ENCODE measurements at regions of chr15 and their contacts with region 1.

Region 1: GRCh38 chr15:60326824-60327654 is 70.7 kb downstream of the ANXA2 start:
- DNase-seq: peak; percentile 47
- ATAC-seq: peak; percentile 74
- H3K4me3 ChIP-seq: no peak overlapping the region
- H3K27ac ChIP-seq: no peak overlapping the region
- H3K4me1 ChIP-seq: no peaks in the 10 kb centered on the region
- H3K27me3 ChIP-seq: peaks cover 42% of the 10 kb centered on the region
- CTCF ChIP-seq: peak; percentile 77 to 96 (median 83)
- POLR2A ChIP-seq: no peak
- RAD21 ChIP-seq: peak; percentile 91

Region 2: DNA sequence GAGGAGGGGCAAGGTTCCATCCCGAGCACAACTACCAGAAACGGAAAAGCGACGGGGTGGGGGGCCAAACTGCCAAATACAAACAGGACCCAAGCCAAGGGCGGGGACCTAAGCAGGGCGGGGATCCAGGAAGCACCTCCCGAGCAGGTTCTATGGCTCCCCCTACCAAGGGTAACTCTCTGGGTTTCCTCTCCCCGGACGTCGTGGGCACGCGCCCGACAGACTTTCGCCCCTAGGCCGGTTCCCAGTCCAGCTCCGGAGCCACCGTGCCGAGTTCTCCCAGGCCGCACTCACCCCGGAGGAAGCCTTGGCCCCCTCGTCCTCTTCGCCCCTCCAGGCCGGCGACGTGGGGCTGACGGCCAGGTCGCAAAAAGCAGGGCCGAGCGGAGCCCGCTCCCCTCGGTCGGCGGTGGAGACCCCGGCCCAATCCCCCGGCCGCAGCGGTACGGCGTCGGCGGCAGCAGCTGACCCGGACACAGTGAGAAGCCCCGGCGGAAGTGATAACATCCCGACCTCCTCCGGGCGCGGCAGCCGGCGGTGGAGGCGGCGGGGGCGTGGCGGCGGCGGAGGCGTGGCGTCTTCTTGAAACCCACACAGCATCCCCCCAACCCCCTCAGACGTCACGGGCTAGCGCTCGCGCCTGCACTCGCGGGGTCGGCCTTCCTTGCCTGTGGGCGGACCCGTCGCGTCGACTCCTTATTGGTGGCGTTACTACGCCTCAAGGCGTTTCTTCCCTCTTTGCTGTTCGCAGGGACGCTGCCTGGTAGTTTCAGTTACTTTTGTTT is 638.0 kb before region 1 on chr15 and contains the start of gene BNIP2:
- CTCF ChIA-PET with region 1: interaction called, 50 read pairs
- POLR2A ChIA-PET with region 1: no interaction called
- RAD21 ChIA-PET with region 1: interaction called in 1 of 2 experiments, 6 read pairs
- intact Hi-C with region 1: loop called (anchors 1 kb)
- DNase-seq: peak; percentile 94
- ATAC-seq: peak; percentile 96
- H3K4me3 ChIP-seq: peak within 1 kb of the TSS; percentile 85 to 92
- H3K27ac ChIP-seq: peak within 1 kb of the TSS; percentile 95
- H3K4me1 ChIP-seq: peaks cover 15% of the 10 kb centered on the region in 2 experiments
- H3K27me3 ChIP-seq: no peaks in the 10 kb centered on the region
- CTCF ChIP-seq: no peak
- POLR2A ChIP-seq: no peak
- RAD21 ChIP-seq: no peak
- total RNA-seq, gene BNIP2: 53.1 TPM

Region 3: DNA sequence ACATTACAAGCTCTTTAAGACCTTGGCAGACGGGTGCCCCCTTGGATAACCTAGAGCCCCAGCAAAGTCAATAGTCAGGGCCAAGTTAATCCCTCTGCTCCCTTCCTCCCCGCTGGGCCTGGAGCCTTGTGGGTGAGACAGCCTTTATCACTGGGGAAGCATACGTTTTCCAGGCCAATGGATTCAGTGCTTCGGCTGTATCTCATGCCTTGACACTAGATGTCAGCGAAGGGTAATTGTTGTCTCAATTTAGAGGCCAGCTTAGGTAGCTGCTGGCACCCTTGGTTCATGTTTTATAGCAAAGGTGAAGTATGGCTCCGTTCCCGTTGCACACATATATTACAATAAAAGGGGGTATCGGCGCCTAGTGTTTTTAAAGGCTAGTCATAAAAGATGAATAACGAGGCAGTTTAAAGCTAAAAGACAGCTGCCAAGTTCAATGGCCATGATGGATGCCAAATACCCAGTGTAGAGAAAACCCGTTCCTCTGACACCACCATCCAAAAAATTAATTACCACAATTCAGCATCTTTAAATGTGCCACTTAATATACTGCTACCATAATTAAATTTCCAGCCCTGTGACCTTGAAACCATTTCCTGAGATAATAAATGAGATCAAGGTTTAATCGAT is 585.6 kb before region 1 on chr15:
- CTCF ChIA-PET with region 1: interaction called, 14 read pairs
- POLR2A ChIA-PET with region 1: no interaction called
- RAD21 ChIA-PET with region 1: no interaction called
- intact Hi-C with region 1: loop called (anchors 5 kb)
- DNase-seq: peak; percentile 15
- ATAC-seq: peak; percentile 83
- H3K4me3 ChIP-seq: no peak overlapping the region
- H3K27ac ChIP-seq: no peak overlapping the region
- H3K4me1 ChIP-seq: no peaks in the 10 kb centered on the region
- H3K27me3 ChIP-seq: peaks cover 27% of the 10 kb centered on the region
- CTCF ChIP-seq: peak; percentile 9 to 37 (median 17); a peak in 3 of 6 replicates
- POLR2A ChIP-seq: no peak
- RAD21 ChIP-seq: peak; percentile 43; the same call in 1 of the 2 replicates

Region 4: DNA sequence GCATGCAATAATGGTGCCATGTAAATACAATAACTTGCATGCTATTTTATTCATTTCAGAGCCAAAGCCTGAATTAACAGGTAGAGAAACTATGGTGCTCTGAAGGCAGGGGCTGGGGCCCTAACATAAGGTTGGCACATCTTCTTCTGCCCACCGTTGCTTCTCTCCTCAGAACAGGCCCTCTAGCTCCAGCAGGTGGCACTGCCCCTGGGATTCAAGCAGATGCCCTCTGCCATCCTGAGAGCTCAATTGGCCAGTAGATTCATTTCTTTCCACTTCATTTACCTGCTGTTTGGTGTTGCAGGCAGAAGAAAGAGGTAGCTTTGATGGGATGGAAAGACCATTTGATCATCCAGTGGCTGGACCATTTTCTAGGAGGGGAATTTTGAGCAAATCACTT is 192.4 kb before region 1 on chr15:
- CTCF ChIA-PET with region 1: interaction called, 7 read pairs
- POLR2A ChIA-PET with region 1: no interaction called
- RAD21 ChIA-PET with region 1: interaction called in 1 of 2 experiments, 4 read pairs
- intact Hi-C with region 1: loop called (anchors 5 kb)
- DNase-seq: no peak
- ATAC-seq: peak; percentile 78
- H3K4me3 ChIP-seq: no peak overlapping the region
- H3K27ac ChIP-seq: no peak overlapping the region
- H3K4me1 ChIP-seq: no peaks in the 10 kb centered on the region
- H3K27me3 ChIP-seq: peaks cover 54% of the 10 kb centered on the region
- CTCF ChIP-seq: peak in 2 of 3 experiments; percentile 36 to 42; a peak in 4 of 6 replicates
- POLR2A ChIP-seq: no peak
- RAD21 ChIP-seq: 0 out of 2 replicates have a peak, but pooled peaks have one; percentile 12

Region 5: DNA sequence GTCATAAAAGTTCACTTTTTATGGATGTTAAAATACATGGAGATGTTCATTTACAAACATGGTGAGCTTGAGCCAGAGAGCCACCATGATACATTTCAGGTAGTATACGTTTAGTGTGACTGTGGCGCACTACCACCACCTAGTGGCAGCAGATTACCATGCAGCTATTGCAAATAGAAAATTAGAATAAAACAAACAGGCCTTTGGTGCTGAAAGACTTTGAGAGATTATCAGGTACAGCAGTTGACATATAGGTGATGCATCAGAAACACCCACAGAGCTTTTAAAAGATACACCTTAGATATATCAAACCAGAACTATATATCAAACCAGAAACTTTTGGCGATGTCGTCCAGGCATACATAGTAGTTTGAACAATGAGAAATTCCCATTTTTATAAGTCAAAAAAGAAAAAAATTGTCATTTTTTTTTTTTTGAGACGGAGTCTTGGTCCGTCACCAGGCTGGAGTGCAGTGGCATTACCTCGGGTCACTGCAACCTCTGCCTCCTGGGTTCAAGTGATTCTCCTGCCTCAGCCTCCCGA is 193.9 kb after region 1 on chr15:
- CTCF ChIA-PET with region 1: interaction called, 76 read pairs
- POLR2A ChIA-PET with region 1: no interaction called
- RAD21 ChIA-PET with region 1: interaction called, 5 read pairs
- intact Hi-C with region 1: loop called (anchors 1 kb)
- DNase-seq: peak; percentile 57
- ATAC-seq: peak; percentile 87
- H3K4me3 ChIP-seq: no peak overlapping the region
- H3K27ac ChIP-seq: no peak overlapping the region
- H3K4me1 ChIP-seq: peaks cover 3 to 15% of the 10 kb centered on the region in 2 experiments; a peak in 2 of 4 replicates
- H3K27me3 ChIP-seq: no peaks in the 10 kb centered on the region
- CTCF ChIP-seq: peak; percentile 76 to 97 (median 88); a peak in 5 of 6 replicates
- POLR2A ChIP-seq: no peak
- RAD21 ChIP-seq: peak; percentile 88

Measured in HCT116 (cell line).